Transverse colon (tissue), 4 donors: ENCODE measurements at regions of chr2 and their contacts with region 1.

Region 1: GRCh38 chr2:48420512-48421197 is 109.3 kb upstream of the STON1 start:
- DNase-seq: peak; percentile 91
- H3K4me3 ChIP-seq: no peak overlapping the region
- H3K27ac ChIP-seq: no peak overlapping the region
- H3K4me1 ChIP-seq: peaks cover 0 to 11% (median 3%) of the 10 kb centered on the region in 4 donors
- H3K27me3 ChIP-seq: peaks cover 7% of the 10 kb centered on the region
- CTCF ChIP-seq: peak; percentile 93 to 98 (median 97)
- EP300 ChIP-seq: no peak
- POLR2A ChIP-seq: no peak

Region 2: DNA sequence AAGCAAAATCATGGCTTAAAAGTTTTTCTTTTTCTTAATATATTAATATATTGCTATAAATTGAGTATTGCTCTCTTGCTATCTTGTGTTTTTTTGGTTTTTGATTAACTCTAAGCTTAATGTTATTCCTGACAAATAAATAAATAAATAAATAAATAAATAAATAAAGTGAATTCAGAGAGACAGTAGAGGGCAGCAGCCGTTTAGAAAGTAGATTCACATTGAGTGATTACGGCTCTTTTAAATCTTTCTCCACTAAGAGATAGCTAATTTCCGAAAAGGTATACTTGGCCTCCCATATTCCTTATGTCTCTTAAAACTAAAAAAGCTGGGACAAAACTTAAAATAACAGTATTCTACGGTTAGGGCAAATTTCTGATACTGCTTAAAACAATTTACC is 983.4 kb before region 1 on chr2:
- in situ Hi-C with region 1: loop called in 1 of 4 experiments (anchors 25 kb)
- intact Hi-C with region 1: no loop called
- DNase-seq: no peak
- H3K4me3 ChIP-seq: no peak overlapping the region
- H3K27ac ChIP-seq: no peak overlapping the region
- H3K4me1 ChIP-seq: no peaks in the 10 kb centered on the region
- H3K27me3 ChIP-seq: no peaks in the 10 kb centered on the region
- CTCF ChIP-seq: peak in 4 of 5 experiments; percentile 27 to 31 (median 30)
- EP300 ChIP-seq: no peak
- POLR2A ChIP-seq: no peak

Region 3: DNA sequence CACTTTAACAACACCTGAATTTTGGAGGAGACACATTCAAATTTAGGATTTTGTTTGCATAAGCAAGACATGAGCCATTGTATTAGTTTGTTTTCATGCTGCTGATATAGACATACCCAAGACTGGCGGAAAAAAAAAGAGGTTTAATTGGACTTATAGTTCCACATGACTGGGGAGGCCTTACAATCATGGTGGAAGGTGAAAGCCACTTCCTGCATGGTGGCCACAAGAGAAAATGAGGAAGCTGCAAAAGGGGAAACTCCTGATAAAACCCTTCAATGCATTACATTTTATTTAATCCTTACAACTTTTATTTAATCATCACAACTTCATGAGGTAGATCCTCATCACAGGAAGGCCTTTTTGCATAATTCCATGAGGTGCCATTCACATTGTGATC is 132.7 kb before region 1 on chr2:
- in situ Hi-C with region 1: no loop called
- intact Hi-C with region 1: no loop called
- DNase-seq: no peak
- H3K4me3 ChIP-seq: no peak overlapping the region
- H3K27ac ChIP-seq: no peak overlapping the region
- H3K4me1 ChIP-seq: no peaks in the 10 kb centered on the region
- H3K27me3 ChIP-seq: no peaks in the 10 kb centered on the region
- CTCF ChIP-seq: no peak
- EP300 ChIP-seq: no peak
- POLR2A ChIP-seq: no peak